ENCODE measurements at regions of chr7 and their contacts with region 1.

Region 1: GRCh38 chr7:106153891-106154449 is 41.9 kb upstream of the SYPL1 start:
- DNase-seq: peak; percentile 63 to 90 (median 81)
- ATAC-seq: peak; percentile 96 to 100 (median 100)
- H3K4me3 ChIP-seq: no peak overlapping the region
- H3K27ac ChIP-seq: no peak overlapping the region
- H3K4me1 ChIP-seq: no peaks in the 10 kb centered on the region
- H3K27me3 ChIP-seq: no peaks in the 10 kb centered on the region
- CTCF ChIP-seq: peak; percentile 68 to 91 (median 86)

Region 2: GRCh38 chr7:106031300-106032035 is 122.5 kb before region 1 on chr7:
- intact Hi-C with region 1: no loop called
- DNase-seq: no peak
- ATAC-seq: no peak
- H3K4me3 ChIP-seq: no peak overlapping the region
- H3K27ac ChIP-seq: no peak overlapping the region
- H3K4me1 ChIP-seq: no peaks in the 10 kb centered on the region
- H3K27me3 ChIP-seq: no peaks in the 10 kb centered on the region
- CTCF ChIP-seq: no peak

Region 3: DNA sequence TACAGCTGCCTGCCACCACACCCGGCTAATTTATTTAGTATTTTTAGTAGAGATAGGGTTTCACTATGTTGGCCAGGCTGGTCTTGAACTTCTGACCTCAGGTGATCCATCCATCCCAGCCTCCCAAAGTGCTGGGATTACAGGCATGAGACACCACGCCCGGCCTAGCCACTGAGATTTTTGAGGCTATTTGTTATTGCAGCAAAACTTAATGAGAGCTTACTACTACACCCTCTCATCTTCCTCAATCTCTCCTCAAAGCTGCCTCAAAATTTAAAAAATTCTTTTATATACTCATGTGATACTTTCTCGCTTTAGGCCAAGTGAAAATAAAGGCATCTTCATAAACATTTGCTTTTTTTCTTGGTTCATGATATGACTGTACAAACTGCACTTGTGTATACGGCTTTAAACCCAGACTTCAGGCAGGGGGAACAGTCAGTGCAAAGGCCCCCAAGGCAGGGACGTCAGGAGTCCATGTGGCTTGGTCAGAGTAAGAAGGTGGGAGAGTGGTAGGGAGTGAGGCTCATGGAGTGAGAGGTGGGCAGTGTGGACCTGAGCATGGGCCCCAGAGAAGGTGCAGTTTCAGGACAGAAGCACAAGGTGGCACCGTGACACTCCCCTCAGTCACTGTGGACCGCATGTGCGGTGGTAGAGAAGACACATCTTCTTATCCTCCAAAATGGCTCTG is 97.3 kb before region 1 on chr7:
- intact Hi-C with region 1: loop called (anchors 5 to 10 kb)
- DNase-seq: peak in 4 of 6 donors; percentile 41 to 72 (median 65)
- ATAC-seq: peak; percentile 79 to 93 (median 93)
- H3K4me3 ChIP-seq: no peak overlapping the region
- H3K27ac ChIP-seq: no peak overlapping the region
- H3K4me1 ChIP-seq: peaks cover 0 to 7% (median 0%) of the 10 kb centered on the region in 3 donors
- H3K27me3 ChIP-seq: no peaks in the 10 kb centered on the region
- CTCF ChIP-seq: peak; percentile 56 to 81 (median 70)

Region 4: DNA sequence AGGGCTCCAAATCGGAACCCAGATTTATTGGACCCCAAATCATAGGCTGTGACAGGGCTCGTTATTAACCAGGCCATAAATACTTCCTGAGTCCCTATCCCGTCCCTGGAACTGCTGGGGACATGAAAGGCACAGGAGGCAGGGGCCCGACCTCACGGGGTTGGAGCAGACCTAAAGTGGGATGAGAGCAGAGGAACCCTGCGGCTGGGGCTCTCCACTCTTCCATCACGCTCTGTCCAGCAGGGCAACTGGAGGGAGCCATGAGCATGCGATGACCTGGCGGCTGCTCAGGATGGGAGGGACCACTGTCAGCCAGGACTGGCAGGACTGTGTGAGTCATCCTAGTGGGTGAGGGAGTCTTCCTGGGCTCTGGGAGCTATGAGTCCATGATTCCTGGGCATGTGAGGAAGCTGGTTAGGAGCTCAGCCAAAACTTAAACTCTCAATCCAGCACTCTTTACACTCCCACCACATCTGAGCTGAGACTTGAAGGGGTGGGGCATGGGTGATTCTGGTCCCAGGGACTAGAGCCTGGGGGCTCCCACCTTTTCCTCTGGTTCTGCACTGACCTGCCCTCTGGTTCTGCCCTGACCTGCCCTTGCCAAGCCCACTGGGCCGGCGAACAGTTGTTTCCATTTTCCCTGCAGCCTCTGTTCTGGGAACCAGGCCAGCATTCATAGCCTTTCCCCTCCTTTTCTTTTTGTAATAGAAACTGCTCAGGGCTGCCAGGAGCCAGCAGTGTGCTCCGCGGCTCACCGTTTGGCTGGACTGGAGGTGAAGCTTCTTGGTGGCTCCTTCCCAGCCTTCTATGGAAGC is 89.0 kb before region 1 on chr7:
- intact Hi-C with region 1: loop called in 1 of 3 experiments (anchors 10 kb)
- DNase-seq: peak in 5 of 6 donors; percentile 59 to 74 (median 68)
- ATAC-seq: peak; percentile 81 to 91 (median 86)
- H3K4me3 ChIP-seq: peak overlapping the region in 2 of 4 donors; percentile 3 to 11
- H3K27ac ChIP-seq: peak overlapping the region; percentile 48 to 75 (median 58)
- H3K4me1 ChIP-seq: peaks cover 0 to 6% (median 1%) of the 10 kb centered on the region in 3 donors
- H3K27me3 ChIP-seq: no peaks in the 10 kb centered on the region
- CTCF ChIP-seq: no peak